ENCODE measurements at regions of chr22 and their contacts with region 1.

Region 1: GRCh38 chr22:27804470-27805297 is 3.1 kb upstream of the MN1 start:
- DNase-seq: peak; percentile 47 to 72
- ATAC-seq: peak; percentile 32 to 38
- H3K4me3 ChIP-seq: no peak overlapping the region
- H3K27ac ChIP-seq: peak overlapping the region in 2 of 4 donors; percentile 14 to 32
- H3K4me1 ChIP-seq: peaks cover 10 to 37% of the 10 kb centered on the region in 2 donors
- H3K27me3 ChIP-seq: no peaks in the 10 kb centered on the region
- CTCF ChIP-seq: peak; percentile 52 to 80 (median 73)
- POLR2A ChIP-seq: no peak

Region 2: GRCh38 chr22:26756675-26757293 is 1047.9 kb before region 1 on chr22:
- in situ Hi-C with region 1: loop called in 2 of 4 experiments (anchors 25 kb)
- intact Hi-C with region 1: loop called (anchors 5 kb)
- DNase-seq: no peak
- ATAC-seq: peak; percentile 33 to 70
- H3K4me3 ChIP-seq: peak overlapping the region in 1 of 4 donors; percentile 32
- H3K27ac ChIP-seq: no peak overlapping the region
- H3K4me1 ChIP-seq: peaks cover 0 to 3% of the 10 kb centered on the region in 2 donors
- H3K27me3 ChIP-seq: no peaks in the 10 kb centered on the region
- CTCF ChIP-seq: peak; percentile 79 to 95 (median 88)
- POLR2A ChIP-seq: no peak

Region 3: GRCh38 chr22:27489176-27489675 is 315.5 kb before region 1 on chr22:
- in situ Hi-C with region 1: no loop called
- intact Hi-C with region 1: loop called (anchors 5 kb)
- DNase-seq: no peak
- ATAC-seq: no peak
- H3K4me3 ChIP-seq: no peak overlapping the region
- H3K27ac ChIP-seq: peak overlapping the region in 2 of 4 donors; percentile 7 to 16
- H3K4me1 ChIP-seq: peaks cover 0 to 6% of the 10 kb centered on the region in 2 donors
- H3K27me3 ChIP-seq: peaks cover 0 to 7% (median 2%) of the 10 kb centered on the region in 3 donors
- CTCF ChIP-seq: no peak
- POLR2A ChIP-seq: no peak

Region 4: GRCh38 chr22:27718186-27719032 is 86.3 kb before region 1 on chr22:
- in situ Hi-C with region 1: no loop called
- intact Hi-C with region 1: loop called (anchors 1 kb)
- DNase-seq: peak; percentile 78 to 91
- ATAC-seq: peak; percentile 75 to 86
- H3K4me3 ChIP-seq: peak overlapping the region in 2 of 4 donors; percentile 15 to 24
- H3K27ac ChIP-seq: peak overlapping the region; percentile 73 to 81 (median 76)
- H3K4me1 ChIP-seq: peaks cover 33 to 46% of the 10 kb centered on the region in 2 donors
- H3K27me3 ChIP-seq: no peaks in the 10 kb centered on the region
- CTCF ChIP-seq: no peak
- POLR2A ChIP-seq: peak; percentile 60 to 64

Region 5: GRCh38 chr22:27748751-27749191 is 55.9 kb before region 1 on chr22:
- in situ Hi-C with region 1: no loop called
- intact Hi-C with region 1: no loop called
- DNase-seq: no peak
- ATAC-seq: peak; percentile 20 to 43
- H3K4me3 ChIP-seq: no peak overlapping the region
- H3K27ac ChIP-seq: peak overlapping the region; percentile 47 to 68 (median 62)
- H3K4me1 ChIP-seq: peaks cover 17 to 31% of the 10 kb centered on the region in 2 donors
- H3K27me3 ChIP-seq: no peaks in the 10 kb centered on the region
- CTCF ChIP-seq: no peak
- POLR2A ChIP-seq: no peak

Region 6: DNA sequence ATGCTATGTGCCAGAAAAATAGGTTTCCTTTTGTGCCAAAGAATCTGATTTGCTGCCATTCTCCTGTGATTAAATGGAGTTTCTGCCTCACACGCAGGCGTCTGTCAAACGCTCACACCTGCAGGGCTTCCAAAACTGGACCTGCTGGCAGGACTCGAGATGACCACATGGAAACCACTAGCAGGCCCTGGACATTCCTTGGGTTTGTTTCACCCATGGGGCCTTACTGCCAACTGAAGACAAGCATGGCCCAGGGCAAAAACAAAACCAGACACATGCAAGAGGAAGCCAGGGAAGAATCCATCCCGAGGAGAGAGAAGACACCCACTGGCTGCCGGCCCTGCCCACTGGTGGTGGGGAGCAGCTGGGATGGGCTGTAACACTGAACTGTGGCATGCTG is 52.8 kb after region 1 on chr22:
- in situ Hi-C with region 1: no loop called
- intact Hi-C with region 1: loop called (anchors 5 kb)
- DNase-seq: peak; percentile 50 to 74
- ATAC-seq: peak; percentile 82 to 90
- H3K4me3 ChIP-seq: no peak overlapping the region
- H3K27ac ChIP-seq: peak overlapping the region; percentile 55 to 81 (median 74)
- H3K4me1 ChIP-seq: peaks cover 22 to 35% of the 10 kb centered on the region in 2 donors
- H3K27me3 ChIP-seq: no peaks in the 10 kb centered on the region
- CTCF ChIP-seq: no peak
- POLR2A ChIP-seq: peak in 1 of 2 donors; percentile 14

Measured in gastrocnemius medialis (tissue), 4 donors.